Right cardiac atrium (tissue), 5 donors: ENCODE measurements at regions of chr20 and their contacts with region 1.

Region 1: DNA sequence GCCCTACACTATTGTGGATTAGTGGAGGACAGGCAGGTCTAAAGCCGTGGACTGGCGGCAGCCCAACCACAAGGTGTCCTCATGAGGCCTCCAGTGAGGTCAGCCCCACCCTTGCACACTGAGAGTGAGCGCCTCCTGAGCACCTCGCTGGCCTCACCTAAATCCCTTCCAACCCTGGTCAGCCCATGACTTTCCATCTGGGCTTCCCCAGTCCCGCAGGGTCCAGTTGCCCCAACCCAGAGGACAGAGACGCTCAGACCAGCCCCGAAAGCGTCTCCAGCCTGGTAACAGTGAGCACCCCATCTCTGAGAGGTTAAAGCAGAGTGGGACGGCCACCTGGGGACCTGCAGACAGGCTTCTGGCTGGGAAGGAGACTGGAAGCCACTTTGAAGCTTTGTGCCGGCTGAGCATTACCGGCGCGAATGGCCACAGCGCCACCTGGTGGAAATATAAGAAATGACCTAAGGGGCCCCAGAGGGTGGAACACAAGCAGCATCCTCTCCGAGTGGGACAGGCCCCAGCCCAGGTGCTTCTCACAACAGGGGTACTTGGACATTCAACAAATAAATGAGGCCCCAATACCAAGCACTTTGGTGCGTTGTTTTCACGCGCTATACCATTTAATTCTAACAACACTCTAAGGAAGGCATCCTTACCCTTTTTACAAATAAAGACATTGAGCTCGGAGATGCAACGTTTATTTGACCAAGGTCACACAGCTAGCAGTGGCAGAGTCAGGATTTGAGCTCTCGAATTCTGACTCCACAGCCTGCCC is 65.7 kb upstream of the TOP1 start:
- DNase-seq: peak; percentile 59 to 80 (median 74)
- ATAC-seq: peak; percentile 75 to 78
- H3K4me3 ChIP-seq: no peak overlapping the region
- H3K27ac ChIP-seq: no peak overlapping the region
- H3K4me1 ChIP-seq: no peaks in the 10 kb centered on the region
- H3K27me3 ChIP-seq: no peaks in the 10 kb centered on the region

Region 2: GRCh38 chr20:39112178-39112743 is 1850.7 kb before region 1 on chr20:
- intact Hi-C with region 1: loop called in 3 of 4 experiments (anchors 5 kb)
- DNase-seq: peak; percentile 49 to 67 (median 61)
- ATAC-seq: peak; percentile 90 to 93
- H3K4me3 ChIP-seq: no peak overlapping the region
- H3K27ac ChIP-seq: no peak overlapping the region
- H3K4me1 ChIP-seq: no peaks in the 10 kb centered on the region
- H3K27me3 ChIP-seq: no peaks in the 10 kb centered on the region

Region 3: GRCh38 chr20:39264506-39265172 is 1698.3 kb before region 1 on chr20:
- intact Hi-C with region 1: loop called (anchors 5 to 10 kb)
- DNase-seq: peak; percentile 67 to 76 (median 70)
- ATAC-seq: peak; percentile 57 to 64
- H3K4me3 ChIP-seq: no peak overlapping the region
- H3K27ac ChIP-seq: no peak overlapping the region
- H3K4me1 ChIP-seq: no peaks in the 10 kb centered on the region
- H3K27me3 ChIP-seq: no peaks in the 10 kb centered on the region

Region 4: DNA sequence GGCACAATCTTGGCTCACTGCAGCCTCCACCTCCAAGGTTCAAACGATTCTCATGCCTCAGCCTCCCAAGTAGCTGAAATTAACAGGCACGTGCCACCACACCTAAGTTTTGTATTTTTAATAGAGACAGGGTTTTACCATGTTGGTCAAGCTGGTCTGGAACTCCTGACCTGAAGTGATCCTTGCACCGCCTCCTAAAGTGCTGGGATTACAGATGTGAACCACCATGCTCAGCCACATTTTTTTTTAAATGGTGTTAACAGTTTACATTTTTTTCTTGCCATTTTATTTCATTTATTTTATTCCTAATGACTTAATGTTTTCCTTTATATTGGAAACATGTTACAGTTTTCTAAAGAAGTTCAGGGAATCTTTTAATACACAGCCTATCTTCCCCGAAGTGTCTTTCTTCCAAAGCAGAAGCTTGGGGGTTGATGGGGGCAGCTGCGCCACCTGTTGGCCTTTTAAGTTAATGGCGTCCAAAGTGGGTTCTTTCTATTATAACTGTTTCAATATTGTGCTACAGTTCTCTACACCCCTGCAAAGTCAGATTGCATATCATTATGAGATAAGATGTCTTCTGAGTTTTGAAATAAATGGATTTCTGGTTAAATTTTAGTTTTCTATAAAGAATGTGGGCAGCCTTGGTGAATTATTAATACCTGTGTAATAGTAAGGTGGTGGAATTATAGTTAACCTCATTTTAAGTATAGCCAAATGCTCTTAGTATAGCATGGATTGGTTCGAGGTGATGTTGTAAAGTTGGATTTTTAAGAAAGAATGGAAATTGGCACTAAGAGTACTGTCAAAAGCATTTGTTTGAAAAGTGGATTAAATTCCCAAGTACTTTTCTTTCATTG is 132.4 kb after region 1 on chr20:
- intact Hi-C with region 1: loop called in 2 of 4 experiments (anchors 5 kb)
- DNase-seq: peak; percentile 46 to 75 (median 67)
- ATAC-seq: peak; percentile 67 to 80
- H3K4me3 ChIP-seq: no peak overlapping the region
- H3K27ac ChIP-seq: no peak overlapping the region
- H3K4me1 ChIP-seq: no peaks in the 10 kb centered on the region
- H3K27me3 ChIP-seq: no peaks in the 10 kb centered on the region